HEK293 (cell line): ENCODE measurements at regions of chr5 and their contacts with region 1.

Region 1: DNA sequence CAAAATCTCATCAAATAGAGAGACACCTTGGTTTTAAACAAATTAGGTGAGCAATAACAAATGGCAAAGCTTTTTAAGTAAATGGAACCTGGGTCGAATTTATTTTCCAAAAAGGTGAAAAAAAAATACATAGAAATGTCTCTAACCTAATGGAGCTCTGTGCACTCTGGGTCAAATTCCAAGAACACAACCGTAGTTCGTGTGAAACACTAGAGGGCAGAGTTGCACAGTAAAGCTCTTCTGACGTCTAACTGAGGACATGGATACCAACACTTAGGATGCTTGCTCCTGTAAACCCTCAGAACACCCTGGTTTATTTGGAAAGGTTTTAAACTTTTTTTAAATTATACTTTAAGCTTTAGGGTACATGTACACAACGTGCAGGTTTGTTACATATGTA is 18.9 kb downstream of the MARCHF11 start:
- H3K4me3 ChIP-seq: no peak overlapping the region
- H3K27ac ChIP-seq: no peak overlapping the region
- H3K4me1 ChIP-seq: no peaks in the 10 kb centered on the region
- CTCF ChIP-seq: no peak

Region 2: GRCh38 chr5:15877914-15878313 is 282.8 kb before region 1 on chr5:
- CTCF ChIA-PET with region 1: no interaction called
- POLR2A ChIA-PET with region 1: no interaction called
- H3K4me3 ChIP-seq: no peak overlapping the region
- H3K27ac ChIP-seq: no peak overlapping the region
- H3K4me1 ChIP-seq: no peaks in the 10 kb centered on the region
- CTCF ChIP-seq: no peak

Region 3: GRCh38 chr5:16178745-16179372 is 18.2 kb after region 1 on chr5:
- CTCF ChIA-PET with region 1: interaction called, 12 read pairs
- POLR2A ChIA-PET with region 1: no interaction called
- H3K4me3 ChIP-seq: peak overlapping the region; percentile 20
- H3K27ac ChIP-seq: no peak overlapping the region
- H3K4me1 ChIP-seq: no peaks in the 10 kb centered on the region
- CTCF ChIP-seq: no peak

Region 4: GRCh38 chr5:16456103-16456832 is 295.6 kb after region 1 on chr5:
- CTCF ChIA-PET with region 1: interaction called, 137 read pairs
- POLR2A ChIA-PET with region 1: no interaction called
- H3K4me3 ChIP-seq: no peak overlapping the region
- H3K27ac ChIP-seq: no peak overlapping the region
- H3K4me1 ChIP-seq: no peaks in the 10 kb centered on the region
- CTCF ChIP-seq: no peak